Dorsolateral prefrontal cortex (tissue), 120 donors: ENCODE measurements at regions of chr16 and their contacts with region 1.

Region 1: DNA sequence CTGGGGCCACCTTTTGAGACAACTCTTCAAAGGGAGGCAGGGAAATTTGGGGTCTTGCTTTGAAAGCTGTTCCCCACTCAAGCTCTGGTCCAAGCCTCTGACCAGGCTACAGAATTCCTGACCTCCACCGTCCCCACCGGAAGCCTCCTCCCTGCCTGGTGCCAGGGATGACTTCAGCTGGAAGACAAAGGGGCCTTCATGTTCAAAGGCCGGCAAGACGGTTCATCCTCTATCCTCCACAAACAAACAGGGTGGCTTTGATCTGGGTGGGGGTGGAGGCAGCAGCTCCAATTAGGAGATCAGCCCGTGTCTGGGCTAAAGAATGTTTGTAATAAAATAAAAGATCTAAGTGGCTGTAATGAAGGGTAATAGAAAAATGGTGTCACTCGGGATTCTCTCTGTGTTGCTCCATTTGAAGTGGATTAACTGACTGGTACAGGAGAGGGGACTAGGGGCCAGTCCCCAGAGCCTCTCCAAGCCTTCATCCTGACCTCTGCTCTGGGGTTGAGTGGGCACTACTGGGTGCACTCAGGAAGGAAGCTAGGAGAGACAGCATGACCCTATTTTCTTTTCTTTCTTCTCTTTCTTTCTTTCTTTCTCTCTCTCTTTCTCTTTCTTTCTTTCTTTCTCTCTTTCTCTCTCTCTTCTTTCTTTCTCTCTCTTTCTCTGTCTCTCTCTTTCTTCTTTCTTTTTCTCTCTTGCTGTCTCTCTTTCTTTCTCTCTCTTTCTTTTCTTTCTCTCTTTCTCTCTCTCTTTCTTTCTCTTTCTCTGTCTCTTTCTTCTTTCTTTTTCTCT is 27.5 kb upstream of the NKD1 start:
- DNase-seq: peak; percentile 7 to 81 (median 70)
- H3K4me3 ChIP-seq: peak overlapping the region in 16 of 59 donors; percentile 1 to 44 (median 20)
- H3K27ac ChIP-seq: peak overlapping the region in 56 of 59 donors; percentile 0 to 93 (median 81)
- H3K27me3 ChIP-seq: peaks cover 0 to 3% (median 0%) of the 10 kb centered on the region in 45 donors
- CTCF ChIP-seq: peak in 7 of 56 donors; percentile 6 to 29 (median 17)

Region 2: DNA sequence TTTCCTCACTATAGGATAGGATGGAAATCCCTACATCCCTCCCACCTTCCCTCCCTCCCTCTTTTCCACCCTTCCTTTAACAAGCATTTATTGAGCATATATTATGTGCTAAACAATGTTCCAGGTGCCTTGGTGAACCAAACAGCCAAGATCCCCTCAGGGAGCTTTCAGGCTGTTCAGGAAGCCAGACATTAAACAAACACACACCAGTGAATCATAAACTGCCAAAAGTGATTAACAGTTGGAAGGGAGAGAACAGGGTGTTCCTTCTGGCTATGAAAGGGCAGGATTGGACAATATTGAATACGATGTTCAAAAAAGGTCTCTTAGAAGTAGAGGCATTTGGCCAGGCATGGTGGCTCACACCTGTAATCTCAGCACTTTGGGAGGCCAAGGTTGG is 518.5 kb before region 1 on chr16:
- intact Hi-C with region 1: no loop called
- DNase-seq: no peak
- H3K4me3 ChIP-seq: no peak overlapping the region
- H3K27ac ChIP-seq: no peak overlapping the region
- H3K27me3 ChIP-seq: no peaks in the 10 kb centered on the region
- CTCF ChIP-seq: no peak

Region 3: DNA sequence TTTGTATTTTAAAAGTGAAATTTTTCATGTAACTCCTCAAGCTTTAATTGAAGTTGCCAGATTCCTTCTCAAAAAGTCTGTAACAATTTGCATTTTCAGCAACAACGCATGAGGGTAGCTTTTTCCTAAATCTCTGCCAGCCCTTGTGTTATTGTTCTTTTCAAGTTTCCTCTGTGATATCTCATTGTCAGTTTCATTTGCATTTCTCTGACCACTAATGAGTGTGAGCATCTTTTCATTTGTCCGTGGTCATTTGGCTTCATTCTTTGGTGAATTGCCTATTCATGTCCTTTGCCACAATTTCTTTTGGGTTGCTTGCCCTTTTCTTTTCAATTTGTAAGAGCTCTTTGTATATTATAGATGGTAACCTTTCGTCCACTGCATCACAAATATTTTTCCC is 40.4 kb before region 1 on chr16:
- intact Hi-C with region 1: loop called in 1 of 2 experiments (anchors 5 kb)
- DNase-seq: no peak
- H3K4me3 ChIP-seq: no peak overlapping the region
- H3K27ac ChIP-seq: peak overlapping the region in 30 of 59 donors; percentile 0 to 81 (median 31)
- H3K27me3 ChIP-seq: peaks cover 0 to 5% (median 0%) of the 10 kb centered on the region in 45 donors
- CTCF ChIP-seq: peak in 4 of 56 donors; percentile 8 to 16 (median 13)

Region 4: GRCh38 chr16:50539822-50540710 is 19.4 kb after region 1 on chr16:
- intact Hi-C with region 1: loop called in 1 of 2 experiments (anchors 2 kb)
- DNase-seq: peak in 7 of 10 donors; percentile 22 to 67 (median 60)
- H3K4me3 ChIP-seq: peak overlapping the region in 15 of 59 donors; percentile 7 to 46 (median 17)
- H3K27ac ChIP-seq: peak overlapping the region in 47 of 59 donors; percentile 3 to 80 (median 61)
- H3K27me3 ChIP-seq: peaks cover 0 to 7% (median 0%) of the 10 kb centered on the region in 45 donors
- CTCF ChIP-seq: peak in 49 of 56 donors; percentile 10 to 58 (median 36)